ENCODE measurements at regions of chr15 and their contacts with region 1.

Region 1: DNA sequence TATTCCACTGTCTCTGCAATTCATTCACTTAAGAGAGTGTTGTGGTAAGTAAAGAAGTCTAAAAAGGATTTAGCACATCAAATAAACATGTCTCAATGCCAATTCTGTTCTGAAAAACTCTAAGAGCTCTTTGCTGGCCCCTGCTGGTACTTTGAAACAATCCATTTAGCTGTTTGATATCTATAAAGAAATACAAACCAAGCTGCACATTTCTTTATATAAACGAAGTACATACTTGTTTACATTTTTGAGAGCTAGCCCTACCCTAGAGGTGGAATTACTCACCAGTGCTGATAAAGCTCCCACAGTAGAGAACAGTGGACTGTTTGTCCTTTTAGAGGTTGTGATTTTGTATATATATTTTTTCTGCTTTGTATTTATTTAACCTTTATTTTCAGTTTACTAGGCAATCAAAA is 75.5 kb downstream of the NEDD4 start:
- DNase-seq: peak; percentile 14
- ATAC-seq: no peak
- H3K4me3 Mint-ChIP-seq: no peak overlapping the region
- H3K27ac Mint-ChIP-seq: no peak overlapping the region
- H3K4me1 Mint-ChIP-seq: no peaks in the 10 kb centered on the region
- H3K27me3 Mint-ChIP-seq: no peaks in the 10 kb centered on the region
- CTCF ChIP-seq: no peak

Region 2: DNA sequence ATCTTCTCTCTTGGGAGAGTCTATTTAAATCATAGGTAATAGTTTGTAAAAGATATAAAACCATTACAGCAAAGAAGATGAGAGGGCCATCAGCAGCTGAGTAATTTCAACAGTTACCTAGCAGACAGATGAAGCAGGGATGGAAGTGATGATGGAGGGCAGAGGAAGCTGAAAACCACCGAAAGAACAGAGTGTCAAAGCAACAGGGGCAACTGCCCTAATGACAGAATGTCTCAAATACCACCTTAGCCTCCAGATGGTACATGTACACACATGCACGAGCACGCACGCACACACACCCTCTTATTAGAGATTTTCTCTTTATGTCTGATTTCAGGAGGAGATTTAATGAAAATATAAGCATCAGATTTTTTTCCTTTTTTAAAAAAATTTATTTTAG is 11.1 kb after region 1 on chr15:
- CTCF ChIA-PET with region 1: interaction called, 11 read pairs
- POLR2A ChIA-PET with region 1: no interaction called
- intact Hi-C with region 1: no loop called
- DNase-seq: no peak
- ATAC-seq: no peak
- H3K4me3 Mint-ChIP-seq: no peak overlapping the region
- H3K27ac Mint-ChIP-seq: no peak overlapping the region
- H3K4me1 Mint-ChIP-seq: peaks cover 3% of the 10 kb centered on the region
- H3K27me3 Mint-ChIP-seq: no peaks in the 10 kb centered on the region
- CTCF ChIP-seq: no peak

Region 3: GRCh38 chr15:55942332-55942731 is 24.4 kb after region 1 on chr15:
- CTCF ChIA-PET with region 1: no interaction called
- POLR2A ChIA-PET with region 1: no interaction called
- intact Hi-C with region 1: no loop called
- DNase-seq: no peak
- ATAC-seq: no peak
- H3K4me3 Mint-ChIP-seq: no peak overlapping the region
- H3K27ac Mint-ChIP-seq: no peak overlapping the region
- H3K4me1 Mint-ChIP-seq: no peaks in the 10 kb centered on the region
- H3K27me3 Mint-ChIP-seq: no peaks in the 10 kb centered on the region
- CTCF ChIP-seq: no peak